ENCODE measurements at regions of chr3 and their contacts with region 1.

Region 1: DNA sequence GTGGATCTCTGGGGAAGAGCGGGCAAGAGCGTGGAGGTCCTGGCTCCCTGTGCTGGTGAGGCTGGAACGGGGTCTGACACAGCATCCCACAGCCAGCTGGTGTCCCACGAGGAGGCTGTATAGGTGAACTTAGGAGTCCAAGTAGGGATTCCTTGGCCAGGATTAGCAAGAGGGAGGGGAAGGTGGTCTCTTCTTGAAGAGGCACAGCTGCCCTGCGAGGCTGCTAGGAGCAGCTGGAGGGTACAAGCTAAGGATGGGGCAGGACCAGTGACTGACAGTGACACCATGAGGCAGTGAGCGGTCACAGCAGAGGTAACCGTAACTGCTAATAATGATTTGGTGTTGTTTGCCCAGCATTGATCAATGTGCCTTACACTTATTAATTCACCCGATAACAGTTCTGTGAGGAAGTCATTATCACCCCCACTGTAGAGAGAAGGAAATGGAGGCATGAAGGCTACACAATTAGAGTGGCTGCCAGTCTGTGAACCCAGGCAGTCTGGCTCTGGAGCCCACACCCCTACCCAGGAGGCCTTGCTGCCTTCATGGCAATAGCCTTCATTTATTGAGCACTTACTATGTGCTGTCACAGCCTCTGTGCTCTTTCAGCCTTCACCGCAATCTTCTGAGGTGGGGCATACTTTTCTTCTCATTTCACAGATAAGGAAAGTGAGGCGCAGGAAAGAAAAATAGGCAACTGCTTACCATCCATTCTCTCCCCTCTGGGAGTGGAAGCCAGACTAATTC is 59.4 kb downstream of the TMEM44 start:
- DNase-seq: peak; percentile 33 to 70 (median 56)
- ATAC-seq: peak; percentile 80
- H3K4me3 ChIP-seq: no peak overlapping the region
- H3K27ac ChIP-seq: no peak overlapping the region
- H3K4me1 ChIP-seq: peaks cover 39 to 53% of the 10 kb centered on the region in 2 experiments
- H3K27me3 ChIP-seq: no peaks in the 10 kb centered on the region
- CTCF ChIP-seq: peak; percentile 68 to 78 (median 73)
- EP300 ChIP-seq: no peak
- POLR2A ChIP-seq: no peak
- RAD21 ChIP-seq: peak; percentile 68 to 81

Region 2: DNA sequence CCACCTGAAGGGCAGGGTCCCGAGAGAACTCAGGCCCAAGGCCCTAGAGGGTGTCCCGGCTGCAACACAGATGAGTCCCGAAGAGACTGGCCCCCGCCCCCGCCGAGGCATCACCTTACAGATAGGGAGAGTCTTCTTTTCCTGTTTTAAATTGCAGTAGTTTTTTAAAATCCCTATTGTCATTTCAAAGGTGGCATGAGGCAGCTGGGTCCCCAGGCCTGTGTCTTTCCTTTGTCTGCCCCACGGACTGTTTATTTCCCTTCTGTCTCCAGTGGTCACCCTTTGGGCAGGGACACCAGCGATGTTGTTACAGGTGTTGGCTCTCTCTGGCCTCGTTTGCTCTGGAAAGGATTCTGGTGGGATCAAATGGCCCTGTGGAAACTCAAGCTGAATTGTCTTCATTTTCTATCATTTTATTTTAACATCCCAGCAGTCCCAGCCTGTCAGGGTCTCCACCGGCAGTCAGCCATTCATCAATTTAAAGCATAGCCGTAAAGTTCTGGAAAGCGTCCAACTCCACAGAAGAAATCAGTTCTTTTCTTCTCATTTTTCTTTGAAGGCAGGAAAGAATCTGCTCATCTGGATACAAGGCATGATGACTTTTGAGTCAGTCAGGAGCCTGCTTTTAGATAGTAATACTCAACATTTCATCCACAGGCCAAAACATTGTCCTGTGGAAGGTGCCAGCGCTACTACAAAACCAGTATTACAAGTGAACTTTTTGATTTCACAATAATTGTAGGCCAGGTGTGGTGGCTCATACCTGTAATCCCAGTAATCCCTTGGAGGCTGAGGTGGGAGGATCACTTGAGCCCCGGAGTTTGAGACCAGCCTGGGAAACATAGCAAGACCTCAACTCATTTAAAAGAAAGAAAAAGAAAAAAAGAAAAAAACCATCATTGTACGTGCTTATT is 341.7 kb before region 1 on chr3:
- CTCF ChIA-PET with region 1: no interaction called
- POLR2A ChIA-PET with region 1: no interaction called
- in situ Hi-C with region 1: no loop called
- intact Hi-C with region 1: no loop called
- DNase-seq: no peak
- ATAC-seq: peak; percentile 61
- H3K4me3 ChIP-seq: no peak overlapping the region
- H3K27ac ChIP-seq: no peak overlapping the region
- H3K4me1 ChIP-seq: peaks cover 7 to 29% of the 10 kb centered on the region in 2 experiments
- H3K27me3 ChIP-seq: no peaks in the 10 kb centered on the region
- CTCF ChIP-seq: no peak
- EP300 ChIP-seq: no peak
- POLR2A ChIP-seq: no peak
- RAD21 ChIP-seq: no peak

Region 3: GRCh38 chr3:194481103-194481502 is 92.8 kb before region 1 on chr3:
- CTCF ChIA-PET with region 1: interaction called, 3 read pairs
- POLR2A ChIA-PET with region 1: no interaction called
- in situ Hi-C with region 1: loop called (anchors 5 kb)
- intact Hi-C with region 1: no loop called
- DNase-seq: no peak
- ATAC-seq: no peak
- H3K4me3 ChIP-seq: no peak overlapping the region
- H3K27ac ChIP-seq: no peak overlapping the region
- H3K4me1 ChIP-seq: peaks cover 13 to 47% of the 10 kb centered on the region in 2 experiments
- H3K27me3 ChIP-seq: no peaks in the 10 kb centered on the region
- CTCF ChIP-seq: no peak
- EP300 ChIP-seq: no peak
- POLR2A ChIP-seq: no peak
- RAD21 ChIP-seq: no peak

Region 4: DNA sequence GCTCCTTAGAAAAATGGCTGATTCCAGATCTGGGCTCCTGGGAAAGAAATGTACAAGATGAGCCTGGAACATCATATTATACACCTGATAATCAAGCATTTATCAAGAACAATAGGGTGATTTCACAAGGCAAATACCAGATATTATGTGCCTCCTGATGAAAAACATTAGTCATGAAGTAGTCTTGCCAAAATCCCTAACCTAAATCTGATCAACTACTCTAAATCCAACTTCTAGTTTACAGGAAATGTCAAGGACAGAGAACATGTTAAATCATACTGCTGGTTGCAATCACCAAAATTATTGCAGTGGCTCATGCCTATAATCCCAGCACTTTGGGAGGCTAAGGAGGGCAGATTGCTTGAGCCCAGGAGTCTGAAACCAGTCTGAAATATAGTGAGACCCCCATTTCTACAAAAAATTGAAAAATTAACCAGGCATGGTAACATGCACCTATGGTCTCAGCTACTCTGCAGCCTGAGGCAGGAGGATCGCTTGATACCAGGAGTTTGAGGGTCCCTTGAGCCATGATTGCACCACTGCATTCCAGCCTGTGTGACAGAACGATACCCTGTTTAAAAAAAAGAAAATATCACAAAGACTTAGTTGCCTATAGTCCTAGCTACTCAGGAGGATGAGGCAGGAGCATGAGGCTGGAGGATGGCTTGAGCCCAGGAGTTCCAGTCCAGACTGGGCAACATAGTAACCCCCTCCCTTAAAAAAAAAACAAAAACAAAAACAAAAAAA is 52.2 kb before region 1 on chr3:
- CTCF ChIA-PET with region 1: no interaction called
- POLR2A ChIA-PET with region 1: interaction called, 4 read pairs
- in situ Hi-C with region 1: no loop called
- intact Hi-C with region 1: loop called (anchors 2 kb)
- DNase-seq: no peak
- ATAC-seq: no peak
- H3K4me3 ChIP-seq: no peak overlapping the region
- H3K27ac ChIP-seq: no peak overlapping the region; the same call in 2 of the 3 replicates
- H3K4me1 ChIP-seq: peaks cover 0 to 11% of the 10 kb centered on the region in 2 experiments; a peak in 4 of 5 replicates
- H3K27me3 ChIP-seq: no peaks in the 10 kb centered on the region
- CTCF ChIP-seq: no peak
- EP300 ChIP-seq: no peak
- POLR2A ChIP-seq: no peak
- RAD21 ChIP-seq: no peak

Region 5: DNA sequence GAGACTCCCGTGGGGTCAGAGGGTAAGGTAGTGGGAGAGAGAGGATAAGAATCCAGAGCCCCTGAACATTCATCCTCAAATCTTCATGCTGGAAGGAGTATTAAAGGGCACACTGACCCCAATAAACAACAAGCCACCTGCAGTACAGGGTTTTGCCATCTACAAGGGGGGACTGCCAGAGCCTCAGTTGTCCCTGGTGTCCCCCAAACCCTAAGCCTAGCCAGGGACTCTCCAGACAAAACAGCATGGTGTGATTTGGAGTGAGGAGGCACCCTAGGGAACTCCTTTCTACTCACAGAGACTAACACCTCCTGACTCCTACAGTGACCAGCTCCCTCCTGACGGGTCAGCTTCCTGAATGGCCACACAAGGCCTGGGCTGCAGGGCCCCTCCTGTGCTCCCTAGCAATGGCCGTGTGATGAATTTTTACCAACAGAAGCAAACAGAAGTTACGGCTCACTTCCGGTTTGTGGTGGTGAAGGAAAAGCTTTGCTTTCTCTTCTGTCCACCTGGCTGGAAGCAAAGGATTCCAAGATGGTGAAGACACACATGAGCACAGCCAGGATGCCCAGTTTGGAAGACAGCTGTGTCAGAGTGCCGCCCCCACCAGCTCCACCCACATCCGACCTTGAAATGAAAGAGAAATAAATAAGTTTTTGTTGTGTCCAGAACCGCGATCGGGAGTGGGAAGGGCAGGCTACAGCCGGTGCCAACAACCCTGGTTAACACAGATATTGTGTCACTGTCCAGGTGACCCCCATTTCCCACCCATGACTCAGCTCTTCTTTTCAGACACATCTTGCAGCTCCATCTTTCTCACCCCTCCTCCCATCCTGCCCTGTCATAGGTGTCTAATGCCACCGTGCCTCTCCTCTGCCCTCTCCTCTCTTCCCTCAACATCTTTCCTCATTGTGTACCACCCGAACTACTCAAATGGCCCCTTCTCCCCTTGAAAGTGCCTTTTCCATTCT is 17.5 kb before region 1 on chr3:
- CTCF ChIA-PET with region 1: no interaction called
- POLR2A ChIA-PET with region 1: interaction called, 10 read pairs
- in situ Hi-C with region 1: no loop called
- intact Hi-C with region 1: no loop called
- DNase-seq: peak; percentile 50 to 65 (median 55)
- ATAC-seq: peak; percentile 75
- H3K4me3 ChIP-seq: no peak overlapping the region
- H3K27ac ChIP-seq: peak overlapping the region; percentile 72
- H3K4me1 ChIP-seq: peaks cover 6 to 22% of the 10 kb centered on the region in 2 experiments; a peak in 4 of 5 replicates
- H3K27me3 ChIP-seq: no peaks in the 10 kb centered on the region
- CTCF ChIP-seq: no peak
- EP300 ChIP-seq: no peak
- POLR2A ChIP-seq: no peak
- RAD21 ChIP-seq: no peak